Calu3 (cell line): ENCODE measurements at regions of chr11 and their contacts with region 1.

Region 1: GRCh38 chr11:125345421-125346178 is 150.5 kb downstream of the FEZ1 start:
- DNase-seq: peak; percentile 51
- H3K4me3 Mint-ChIP-seq: no peak overlapping the region
- H3K27ac Mint-ChIP-seq: no peak overlapping the region
- H3K4me1 Mint-ChIP-seq: no peaks in the 10 kb centered on the region
- H3K27me3 Mint-ChIP-seq: peaks cover 93% of the 10 kb centered on the region
- CTCF ChIP-seq: peak; percentile 47

Region 2: GRCh38 chr11:124961972-124962609 is 383.5 kb before region 1 on chr11:
- CTCF ChIA-PET with region 1: interaction called, 3 read pairs
- intact Hi-C with region 1: loop called (anchors 5 kb)
- DNase-seq: peak; percentile 11
- H3K4me3 Mint-ChIP-seq: no peak overlapping the region
- H3K27ac Mint-ChIP-seq: no peak overlapping the region
- H3K4me1 Mint-ChIP-seq: no peaks in the 10 kb centered on the region
- H3K27me3 Mint-ChIP-seq: no peaks in the 10 kb centered on the region
- CTCF ChIP-seq: no peak

Region 3: DNA sequence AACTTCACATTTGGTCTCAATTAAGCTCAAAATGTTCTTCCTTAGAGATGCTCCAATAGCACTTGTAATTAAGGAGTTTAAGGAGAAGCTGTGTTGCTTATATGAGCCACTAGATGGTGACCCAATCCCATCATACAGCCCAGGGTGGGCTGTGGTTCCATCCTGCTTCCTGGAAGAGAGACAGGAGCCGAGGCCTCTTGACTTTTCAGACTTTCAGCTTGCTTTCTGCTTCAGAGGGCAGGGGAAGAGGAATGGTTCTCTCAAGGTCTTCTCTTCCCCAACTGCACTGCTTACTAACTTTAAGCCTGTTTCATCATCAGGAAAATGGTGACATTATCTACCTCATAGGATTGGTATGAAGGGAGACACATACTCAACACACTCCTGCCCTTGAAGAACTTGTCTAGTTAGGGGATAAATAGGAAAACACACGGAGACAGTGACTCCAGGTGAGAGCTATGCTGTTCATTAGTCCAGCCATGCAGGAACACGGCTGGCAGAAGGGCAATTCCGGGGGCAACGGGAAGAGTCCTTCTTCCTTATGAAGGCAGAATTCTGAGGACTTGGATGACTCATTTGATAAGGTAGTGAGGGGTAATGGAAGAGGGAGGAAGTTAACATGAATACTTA is 254.2 kb before region 1 on chr11:
- CTCF ChIA-PET with region 1: interaction called, 4 read pairs
- intact Hi-C with region 1: loop called (anchors 10 kb)
- DNase-seq: no peak
- H3K4me3 Mint-ChIP-seq: no peak overlapping the region
- H3K27ac Mint-ChIP-seq: peak overlapping the region; percentile 71
- H3K4me1 Mint-ChIP-seq: peaks cover 9% of the 10 kb centered on the region
- H3K27me3 Mint-ChIP-seq: no peaks in the 10 kb centered on the region
- CTCF ChIP-seq: no peak

Region 4: GRCh38 chr11:125164422-125165110 is 181.0 kb before region 1 on chr11 and contains the start of gene PKNOX2:
- CTCF ChIA-PET with region 1: interaction called, 4 read pairs
- intact Hi-C with region 1: loop called (anchors 5 kb)
- DNase-seq: peak; percentile 71
- H3K4me3 Mint-ChIP-seq: peak within 1 kb of the TSS; percentile 78
- H3K27ac Mint-ChIP-seq: no peak within 1 kb of the TSS
- H3K4me1 Mint-ChIP-seq: no peaks in the 10 kb centered on the region
- H3K27me3 Mint-ChIP-seq: peaks cover 100% of the 10 kb centered on the region
- CTCF ChIP-seq: no peak
- total RNA-seq, gene PKNOX2: not detected in 2 replicates

Region 5: GRCh38 chr11:125358254-125358840 is 12.7 kb after region 1 on chr11:
- CTCF ChIA-PET with region 1: interaction called, 12 read pairs
- intact Hi-C with region 1: no loop called
- DNase-seq: no peak
- H3K4me3 Mint-ChIP-seq: no peak overlapping the region
- H3K27ac Mint-ChIP-seq: no peak overlapping the region
- H3K4me1 Mint-ChIP-seq: no peaks in the 10 kb centered on the region
- H3K27me3 Mint-ChIP-seq: peaks cover 85% of the 10 kb centered on the region
- CTCF ChIP-seq: no peak

Region 6: DNA sequence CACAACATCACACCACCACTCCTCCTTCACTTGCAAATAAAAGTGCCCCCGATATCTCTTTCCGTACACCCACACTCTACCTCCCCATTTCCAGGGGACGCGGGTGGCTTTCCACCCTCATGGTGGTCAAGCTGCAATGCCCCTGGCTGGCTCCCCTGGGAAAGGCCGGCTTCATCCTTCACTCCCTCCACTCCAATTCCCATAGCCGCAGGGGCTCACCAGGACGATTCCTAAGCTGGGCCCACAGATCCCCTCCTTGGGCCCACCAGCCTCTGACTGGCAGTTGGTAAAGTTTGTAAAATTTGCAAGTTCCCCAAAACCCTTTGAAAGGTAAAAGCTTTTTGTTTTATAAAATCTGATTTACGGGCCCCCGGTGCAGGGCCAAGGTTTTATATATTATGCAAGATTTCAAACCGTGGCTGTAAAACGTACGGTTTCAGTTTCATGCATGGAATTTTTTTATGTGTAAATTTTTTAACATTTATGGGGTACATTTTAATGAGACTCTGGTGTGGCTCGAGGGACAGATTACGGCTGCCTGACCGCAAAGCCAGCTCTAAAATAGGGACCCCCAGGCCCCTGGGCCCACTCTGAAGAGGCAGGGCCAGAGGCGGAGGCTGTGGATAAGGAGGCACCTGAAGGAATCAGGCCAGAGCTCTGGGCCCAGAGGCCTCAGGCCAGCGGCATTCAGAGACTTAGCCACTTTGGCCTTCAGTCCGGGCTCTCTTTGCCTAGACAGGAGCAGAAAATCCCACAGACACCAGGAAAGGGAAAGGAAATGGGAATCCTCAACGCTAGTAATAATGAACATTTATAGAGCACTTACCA is 44.0 kb after region 1 on chr11:
- CTCF ChIA-PET with region 1: no interaction called
- intact Hi-C with region 1: no loop called
- DNase-seq: no peak
- H3K4me3 Mint-ChIP-seq: no peak overlapping the region
- H3K27ac Mint-ChIP-seq: no peak overlapping the region
- H3K4me1 Mint-ChIP-seq: no peaks in the 10 kb centered on the region
- H3K27me3 Mint-ChIP-seq: peaks cover 81% of the 10 kb centered on the region
- CTCF ChIP-seq: no peak